Activated B cell treated with CpG ODN at 0.5 μM for 24 hours (primary cell): ENCODE measurements at regions of chr2 and their contacts with region 1.

Region 1: DNA sequence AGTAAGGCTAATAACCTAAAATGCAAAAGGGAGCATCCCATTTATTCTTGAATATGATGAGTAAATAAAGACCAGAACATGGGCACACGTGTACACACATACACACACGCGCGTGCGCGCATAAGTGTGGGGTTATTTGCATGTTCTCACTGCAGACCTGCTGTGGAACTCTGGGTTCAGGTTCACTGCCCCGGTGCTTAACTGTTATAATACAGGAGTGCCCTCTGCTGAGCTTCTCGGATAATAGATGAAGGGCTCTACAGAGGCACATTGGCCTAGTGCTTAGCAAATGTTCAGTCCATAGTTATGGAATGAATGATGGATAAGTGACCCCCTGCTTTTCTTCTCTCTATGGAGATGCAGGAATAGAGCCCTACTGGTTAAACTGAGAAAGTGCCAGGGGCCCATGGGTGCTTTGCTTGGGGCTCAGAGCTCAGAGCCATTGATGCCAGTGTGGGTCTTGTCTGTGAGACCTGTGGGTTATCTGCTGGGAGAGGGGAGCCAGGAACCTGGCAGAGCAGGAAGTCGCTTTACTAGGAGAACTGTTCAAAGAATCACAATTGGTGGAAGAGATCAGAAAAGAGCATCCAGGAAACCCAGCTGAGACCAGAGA is 3.6 kb upstream of the ARL4C start:
- DNase-seq: peak; percentile 58
- ATAC-seq: peak; percentile 68
- H3K4me3 Mint-ChIP-seq: no peak overlapping the region
- H3K27ac Mint-ChIP-seq: no peak overlapping the region
- H3K4me1 Mint-ChIP-seq: peaks cover 26% of the 10 kb centered on the region
- H3K27me3 Mint-ChIP-seq: peaks cover 18% of the 10 kb centered on the region
- CTCF ChIP-seq: peak; percentile 39

Region 2: DNA sequence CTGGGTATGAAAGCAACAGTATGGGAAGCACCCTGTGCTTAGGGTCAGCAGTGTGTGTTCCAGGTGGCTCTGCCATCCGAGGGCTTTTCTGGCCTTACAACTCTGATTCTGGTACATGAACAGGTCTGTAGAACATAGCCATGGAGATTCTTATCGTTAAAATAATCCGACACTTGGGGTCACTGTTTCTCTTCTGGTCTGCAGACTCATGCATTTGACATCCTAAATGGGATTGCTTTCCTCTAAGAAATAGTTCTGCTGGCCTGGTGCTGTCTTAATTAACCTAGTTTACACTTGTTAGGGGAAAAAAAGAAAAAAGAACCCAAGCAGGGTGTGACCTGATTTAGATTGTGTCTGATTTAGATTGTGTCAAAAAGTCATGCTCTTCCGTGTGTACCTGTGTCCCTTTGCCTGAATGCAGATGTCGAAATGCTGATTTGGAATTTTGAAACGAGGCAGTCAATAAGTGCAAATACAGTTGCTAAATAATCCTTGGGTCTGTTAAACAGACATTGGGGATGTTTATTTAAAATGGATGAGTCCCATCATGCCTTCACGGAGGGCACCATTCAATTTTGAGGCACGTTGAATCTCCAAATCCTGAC is 523.7 kb before region 1 on chr2:
- CTCF ChIA-PET with region 1: interaction called, 5 read pairs
- POLR2A ChIA-PET with region 1: no interaction called
- intact Hi-C with region 1: loop called (anchors 1 kb)
- DNase-seq: no peak
- ATAC-seq: peak; percentile 45
- H3K4me3 Mint-ChIP-seq: no peak overlapping the region
- H3K27ac Mint-ChIP-seq: no peak overlapping the region
- H3K4me1 Mint-ChIP-seq: no peaks in the 10 kb centered on the region
- H3K27me3 Mint-ChIP-seq: peaks cover 34% of the 10 kb centered on the region
- CTCF ChIP-seq: no peak

Region 3: DNA sequence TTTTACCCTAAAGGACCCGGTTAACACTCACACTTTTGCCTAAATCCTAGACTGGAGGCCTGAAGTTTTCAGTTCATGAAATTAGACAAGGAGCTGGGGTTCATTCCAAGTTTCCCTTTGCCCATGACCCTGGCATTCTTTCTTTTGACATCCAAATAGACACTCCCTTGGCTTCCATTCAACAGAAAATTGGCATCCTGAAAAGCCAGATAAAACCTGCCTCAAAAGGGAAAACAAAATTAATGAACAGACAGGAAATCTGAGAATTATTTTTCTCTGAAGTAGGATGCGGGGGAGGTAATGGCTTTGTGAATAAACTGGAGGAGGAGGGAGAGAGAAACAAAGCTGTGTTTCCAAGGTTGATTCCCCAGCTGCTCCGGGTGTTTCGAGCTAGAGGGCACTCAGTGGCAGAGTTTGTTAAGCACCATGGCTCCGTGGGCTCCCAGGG is 409.0 kb before region 1 on chr2:
- CTCF ChIA-PET with region 1: no interaction called
- POLR2A ChIA-PET with region 1: no interaction called
- intact Hi-C with region 1: no loop called
- DNase-seq: no peak
- ATAC-seq: no peak
- H3K4me3 Mint-ChIP-seq: no peak overlapping the region
- H3K27ac Mint-ChIP-seq: no peak overlapping the region
- H3K4me1 Mint-ChIP-seq: no peaks in the 10 kb centered on the region
- H3K27me3 Mint-ChIP-seq: peaks cover 34% of the 10 kb centered on the region
- CTCF ChIP-seq: no peak

Region 4: DNA sequence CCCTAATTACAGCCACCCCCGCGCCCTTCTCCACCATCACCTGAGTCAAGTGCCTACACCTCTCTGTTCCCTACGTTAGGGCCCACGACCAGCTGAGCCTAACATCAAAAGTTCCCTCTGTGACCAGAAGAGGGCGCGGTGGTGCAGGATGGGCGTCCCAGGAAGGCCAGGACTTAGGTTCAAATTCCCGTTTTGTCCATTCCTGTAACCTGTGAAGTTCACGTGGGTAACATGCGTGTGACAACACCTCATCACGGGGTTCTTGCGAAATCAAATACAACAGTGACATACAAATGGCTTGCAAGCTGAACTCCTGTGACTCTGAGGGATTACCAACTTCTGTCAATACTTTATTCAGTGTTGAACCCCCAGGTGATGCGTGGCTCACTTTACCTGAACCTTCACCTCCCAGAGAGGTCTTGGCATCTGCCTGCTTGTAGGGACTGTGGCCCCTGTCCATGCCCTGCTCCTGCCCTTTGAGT is 211.5 kb before region 1 on chr2:
- CTCF ChIA-PET with region 1: interaction called, 59 read pairs
- POLR2A ChIA-PET with region 1: interaction called, 41 read pairs
- intact Hi-C with region 1: loop called (anchors 1 kb)
- DNase-seq: peak; percentile 50
- ATAC-seq: no peak
- H3K4me3 Mint-ChIP-seq: no peak overlapping the region
- H3K27ac Mint-ChIP-seq: no peak overlapping the region
- H3K4me1 Mint-ChIP-seq: peaks cover 54% of the 10 kb centered on the region
- H3K27me3 Mint-ChIP-seq: peaks cover 17% of the 10 kb centered on the region
- CTCF ChIP-seq: no peak

Region 5: DNA sequence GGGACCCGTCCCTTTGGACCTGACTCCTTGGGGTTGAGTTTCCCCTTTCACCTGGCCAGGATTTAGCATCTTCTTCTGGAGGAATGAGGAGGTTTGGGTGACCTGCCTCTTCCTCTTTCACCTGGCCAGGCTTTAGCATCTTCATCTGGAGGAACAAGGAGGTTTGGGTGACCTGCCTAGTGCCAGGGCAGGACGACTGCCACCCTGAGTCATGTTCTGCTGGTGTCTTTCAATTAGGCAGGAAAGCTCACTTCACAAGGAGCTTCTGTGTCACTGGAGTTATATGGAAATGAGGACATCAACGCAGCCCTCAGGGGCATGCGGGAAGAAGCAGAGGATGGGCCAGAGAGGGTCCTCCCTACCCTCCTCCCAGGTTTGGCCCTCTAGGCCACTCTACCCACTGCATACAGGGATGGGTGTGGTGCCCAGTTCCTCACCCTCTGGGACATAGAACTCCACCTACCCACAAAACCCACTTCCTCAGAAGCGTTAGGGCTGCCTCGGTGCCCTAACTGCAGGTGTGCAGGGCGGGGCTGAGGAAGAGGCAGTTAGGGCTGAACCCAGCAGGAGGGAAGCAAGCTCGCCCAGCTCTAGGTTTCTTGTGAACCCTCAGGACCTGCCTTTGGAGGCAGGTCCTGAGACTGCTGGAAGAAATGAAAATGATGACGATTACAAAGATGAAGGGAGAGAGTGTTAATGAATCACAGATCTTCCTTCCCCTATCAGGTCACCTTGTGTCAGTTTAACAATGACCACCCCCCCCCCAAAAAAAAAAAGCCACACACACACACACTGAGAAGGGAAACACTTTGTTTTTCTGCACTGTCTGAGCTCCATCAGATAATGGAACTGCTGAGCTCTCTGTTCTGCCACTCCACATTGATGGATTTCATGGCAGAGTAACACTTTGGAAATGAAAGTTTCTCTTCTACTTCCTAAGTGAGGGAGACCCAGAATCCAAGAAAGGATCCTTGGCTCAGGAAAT is 74.6 kb before region 1 on chr2:
- CTCF ChIA-PET with region 1: interaction called, 14 read pairs
- POLR2A ChIA-PET with region 1: interaction called, 35 read pairs
- intact Hi-C with region 1: loop called (anchors 1 kb)
- DNase-seq: peak; percentile 62
- ATAC-seq: peak; percentile 92
- H3K4me3 Mint-ChIP-seq: peak overlapping the region; percentile 68
- H3K27ac Mint-ChIP-seq: peak overlapping the region; percentile 82
- H3K4me1 Mint-ChIP-seq: peaks cover 83% of the 10 kb centered on the region
- H3K27me3 Mint-ChIP-seq: no peaks in the 10 kb centered on the region
- CTCF ChIP-seq: no peak

Region 6: DNA sequence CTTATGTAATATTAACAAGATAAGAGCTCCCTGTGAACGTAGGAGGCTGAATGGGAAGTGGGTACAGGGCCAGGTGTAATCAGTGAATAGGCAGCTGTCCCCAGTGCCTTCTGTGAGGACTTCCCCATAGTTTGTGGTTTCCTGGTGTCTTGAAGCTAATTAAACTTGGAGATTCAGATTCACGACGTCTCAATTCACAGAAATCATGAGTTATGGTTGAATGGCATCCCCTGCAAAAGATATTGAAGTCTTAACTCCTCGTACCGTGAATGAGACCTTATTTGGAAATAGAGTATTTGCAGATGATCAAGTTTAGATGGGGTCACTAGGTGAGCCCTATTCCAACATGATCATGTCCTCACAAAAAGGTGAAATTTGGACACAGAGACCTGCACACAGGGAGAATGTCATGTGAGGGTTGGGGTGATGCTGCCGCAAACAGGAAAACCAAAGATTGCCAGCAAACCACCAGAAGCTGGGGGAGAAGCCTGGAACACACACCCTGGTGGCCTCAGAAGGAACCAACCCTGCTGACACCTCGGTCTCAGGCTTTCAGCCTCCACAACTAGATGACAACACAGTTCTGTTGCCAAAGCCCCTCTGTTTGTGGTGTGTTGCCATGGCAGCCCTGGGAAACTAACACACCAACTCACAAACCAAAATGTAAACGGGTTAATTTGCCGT is 16.8 kb before region 1 on chr2:
- CTCF ChIA-PET with region 1: interaction called, 13 read pairs
- POLR2A ChIA-PET with region 1: interaction called, 31 read pairs
- intact Hi-C with region 1: no loop called
- DNase-seq: peak; percentile 47
- ATAC-seq: peak; percentile 86
- H3K4me3 Mint-ChIP-seq: peak overlapping the region; percentile 73
- H3K27ac Mint-ChIP-seq: peak overlapping the region; percentile 71
- H3K4me1 Mint-ChIP-seq: peaks cover 44% of the 10 kb centered on the region
- H3K27me3 Mint-ChIP-seq: no peaks in the 10 kb centered on the region
- CTCF ChIP-seq: no peak